Prostate gland (tissue), 2 donors: ENCODE measurements at regions of chr21 and their contacts with region 1.

Region 1: DNA sequence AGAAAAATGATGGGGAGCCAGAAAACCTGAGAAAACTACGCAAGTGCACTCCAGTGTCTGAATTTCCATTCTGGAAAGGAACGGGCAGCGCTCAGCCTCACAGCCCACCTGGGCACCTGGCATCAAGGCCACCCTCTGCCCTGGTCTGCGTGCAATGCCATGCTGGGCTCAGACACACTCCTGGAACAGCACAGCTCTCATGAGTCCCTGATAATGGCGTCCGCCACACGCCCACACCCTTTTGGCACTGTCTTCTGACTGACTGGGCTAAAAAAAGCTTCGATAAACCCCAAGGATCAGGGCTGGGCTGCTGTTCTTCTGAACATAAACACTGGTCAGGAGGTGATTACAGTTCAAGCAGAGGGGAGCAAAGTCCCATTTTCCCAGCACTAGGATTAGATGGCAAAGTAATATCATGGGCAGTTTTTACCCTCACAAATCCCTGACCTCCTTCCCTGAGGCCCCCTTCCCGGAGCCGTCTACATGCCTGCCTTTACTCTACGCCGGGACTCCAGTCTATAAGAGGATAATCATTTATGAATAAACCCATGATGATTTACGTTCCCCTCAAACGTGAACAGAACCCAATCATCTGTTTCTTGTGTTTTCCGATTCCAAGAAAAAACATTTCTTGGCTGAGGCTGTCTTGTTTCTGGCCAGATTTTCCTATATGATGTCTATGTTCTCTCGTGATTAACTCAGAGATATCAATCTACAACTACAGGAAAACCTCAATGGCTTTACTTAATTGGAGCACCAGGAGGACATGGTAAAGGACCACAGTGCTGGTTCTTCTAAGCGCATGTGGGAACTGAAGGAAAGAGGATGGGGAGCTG is 22.6 kb downstream of the RCAN1 start:
- DNase-seq: no peak
- H3K4me3 ChIP-seq: no peak overlapping the region
- H3K27ac ChIP-seq: no peak overlapping the region
- H3K4me1 ChIP-seq: no peaks in the 10 kb centered on the region
- H3K27me3 ChIP-seq: no peaks in the 10 kb centered on the region
- CTCF ChIP-seq: no peak
- POLR2A ChIP-seq: no peak

Region 2: GRCh38 chr21:34526618-34527290 is 65.6 kb before region 1 on chr21:
- intact Hi-C with region 1: loop called (anchors 5 kb)
- DNase-seq: peak; percentile 69
- H3K4me3 ChIP-seq: peak overlapping the region; percentile 22 to 36
- H3K27ac ChIP-seq: peak overlapping the region; percentile 81 to 85
- H3K4me1 ChIP-seq: no peaks in the 10 kb centered on the region
- H3K27me3 ChIP-seq: no peaks in the 10 kb centered on the region
- CTCF ChIP-seq: no peak
- POLR2A ChIP-seq: peak; percentile 49

Region 3: GRCh38 chr21:35138665-35139381 is 546.5 kb after region 1 on chr21:
- intact Hi-C with region 1: no loop called
- DNase-seq: no peak
- H3K4me3 ChIP-seq: no peak overlapping the region
- H3K27ac ChIP-seq: no peak overlapping the region
- H3K4me1 ChIP-seq: no peaks in the 10 kb centered on the region
- H3K27me3 ChIP-seq: no peaks in the 10 kb centered on the region
- CTCF ChIP-seq: no peak
- POLR2A ChIP-seq: no peak